ENCODE measurements at regions of chr5 and their contacts with region 1.

Region 1: GRCh38 chr5:39158127-39158593 is 61.2 kb downstream of the FYB1 start:
- DNase-seq: peak in 1 of 2 donors; percentile 14
- ATAC-seq: no peak
- H3K4me3 ChIP-seq: no peak overlapping the region
- H3K27ac ChIP-seq: no peak overlapping the region
- H3K4me1 ChIP-seq: peaks cover 0 to 56% (median 0%) of the 10 kb centered on the region in 9 donors
- H3K27me3 ChIP-seq: peaks cover 0 to 23% (median 0%) of the 10 kb centered on the region in 7 donors
- CTCF ChIP-seq: no peak

Region 2: DNA sequence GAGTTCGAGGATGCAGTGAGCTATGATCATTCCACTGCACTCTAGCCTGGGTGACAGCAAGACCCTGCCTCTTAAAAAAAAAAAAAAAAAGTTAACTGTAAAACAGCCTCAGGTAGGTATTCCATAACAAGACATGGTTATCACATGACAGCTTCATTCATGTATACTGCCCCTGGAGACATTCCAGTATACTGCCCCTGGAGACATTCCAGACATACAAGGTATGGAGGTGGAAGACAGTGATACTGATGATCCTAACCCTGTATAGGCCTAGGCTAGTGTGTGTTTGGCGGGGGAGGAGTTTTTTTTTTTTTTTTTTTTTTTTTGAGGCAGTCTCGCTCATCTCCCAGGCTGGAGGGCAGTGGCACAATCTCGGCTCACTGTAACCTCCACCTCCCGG is 189.5 kb before region 1 on chr5:
- intact Hi-C with region 1: no loop called
- DNase-seq: no peak
- ATAC-seq: no peak
- H3K4me3 ChIP-seq: no peak overlapping the region
- H3K27ac ChIP-seq: no peak overlapping the region
- H3K4me1 ChIP-seq: no peaks in the 10 kb centered on the region
- H3K27me3 ChIP-seq: no peaks in the 10 kb centered on the region
- CTCF ChIP-seq: no peak

Region 3: GRCh38 chr5:39058178-39058921 is 99.8 kb before region 1 on chr5:
- intact Hi-C with region 1: no loop called
- DNase-seq: no peak
- ATAC-seq: no peak
- H3K4me3 ChIP-seq: peak overlapping the region in 8 of 10 donors; percentile 1 to 45 (median 28)
- H3K27ac ChIP-seq: peak overlapping the region in 5 of 10 donors; percentile 24 to 65 (median 37)
- H3K4me1 ChIP-seq: peaks cover 3 to 97% (median 78%) of the 10 kb centered on the region in 9 donors
- H3K27me3 ChIP-seq: no peaks in the 10 kb centered on the region
- CTCF ChIP-seq: no peak

Region 4: GRCh38 chr5:39283231-39283818 is 125.2 kb after region 1 on chr5:
- intact Hi-C with region 1: loop called in 1 of 10 experiments (anchors 5 kb)
- DNase-seq: peak in 1 of 2 donors; percentile 34
- ATAC-seq: peak in 7 of 8 donors; percentile 72 to 83 (median 79)
- H3K4me3 ChIP-seq: no peak overlapping the region
- H3K27ac ChIP-seq: no peak overlapping the region
- H3K4me1 ChIP-seq: peaks cover 0 to 5% (median 0%) of the 10 kb centered on the region in 9 donors
- H3K27me3 ChIP-seq: peaks cover 0 to 10% (median 0%) of the 10 kb centered on the region in 7 donors
- CTCF ChIP-seq: peak; percentile 35 to 73 (median 66)

Measured in heart right ventricle (tissue), 16 donors.